Calu3 (cell line): ENCODE measurements at regions of chr3 and their contacts with region 1.

Region 1: DNA sequence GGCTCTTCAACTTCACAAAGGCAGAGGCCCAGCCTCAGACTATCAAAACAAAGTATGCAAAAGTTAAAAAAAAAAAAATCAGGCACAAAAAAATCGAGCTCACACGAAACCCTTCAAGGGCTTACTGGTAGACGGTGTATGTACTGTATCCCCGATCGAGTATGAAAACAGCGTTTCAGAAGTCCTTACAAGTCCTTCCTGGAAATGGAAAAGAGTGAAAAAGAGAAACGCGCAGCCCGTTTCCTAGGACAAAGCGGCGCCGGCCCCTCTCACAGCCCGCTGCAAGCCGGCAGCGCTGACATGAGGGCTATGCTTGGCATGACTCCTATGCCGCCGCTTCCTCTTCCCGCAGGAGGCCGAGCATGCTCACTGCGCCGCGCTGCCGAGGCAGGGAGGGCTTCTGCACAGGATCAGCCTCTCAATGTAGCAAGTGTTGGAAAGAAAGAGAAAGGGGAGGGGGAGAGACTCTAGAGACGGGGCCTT is at the start of gene VGLL4:
- DNase-seq: peak; percentile 74
- H3K4me3 Mint-ChIP-seq: peak within 1 kb of the TSS; percentile 93
- H3K27ac Mint-ChIP-seq: peak within 1 kb of the TSS; percentile 92
- H3K4me1 Mint-ChIP-seq: peaks cover 19% of the 10 kb centered on the region
- H3K27me3 Mint-ChIP-seq: no peaks in the 10 kb centered on the region
- CTCF ChIP-seq: no peak
- total RNA-seq, gene VGLL4: 49.1 and 51.3 TPM in 2 replicates

Region 2: GRCh38 chr3:11582191-11582968 is 61.3 kb before region 1 on chr3:
- CTCF ChIA-PET with region 1: no interaction called
- intact Hi-C with region 1: loop called (anchors 5 kb)
- DNase-seq: peak; percentile 55
- H3K4me3 Mint-ChIP-seq: peak overlapping the region; percentile 75
- H3K27ac Mint-ChIP-seq: peak overlapping the region; percentile 67
- H3K4me1 Mint-ChIP-seq: peaks cover 62% of the 10 kb centered on the region
- H3K27me3 Mint-ChIP-seq: no peaks in the 10 kb centered on the region
- CTCF ChIP-seq: no peak